ENCODE measurements at regions of chr15 and their contacts with region 1.

Region 1: GRCh38 chr15:23039151-23039916 is at the start of gene TUBGCP5:
- DNase-seq: peak; percentile 95
- H3K4me3 ChIP-seq: peak within 1 kb of the TSS; percentile 63 to 81
- H3K27ac ChIP-seq: peak within 1 kb of the TSS; percentile 56 to 73
- H3K4me1 ChIP-seq: no peaks in the 10 kb centered on the region
- H3K27me3 ChIP-seq: no peaks in the 10 kb centered on the region
- CTCF ChIP-seq: peak; percentile 17 to 84 (median 44)
- POLR2A ChIP-seq: peak; percentile 75
- total RNA-seq, gene TUBGCP5: 25.0 to 38.7 TPM

Region 2: GRCh38 chr15:22980189-22981050 is 58.9 kb before region 1 on chr15 and contains the start of gene CYFIP1:
- intact Hi-C with region 1: loop called (anchors 5 kb)
- DNase-seq: peak; percentile 81
- H3K4me3 ChIP-seq: peak within 1 kb of the TSS; percentile 68 to 97
- H3K27ac ChIP-seq: peak within 1 kb of the TSS; percentile 85 to 86
- H3K4me1 ChIP-seq: peaks cover 6% of the 10 kb centered on the region
- H3K27me3 ChIP-seq: no peaks in the 10 kb centered on the region
- CTCF ChIP-seq: no peak
- POLR2A ChIP-seq: peak; percentile 44
- total RNA-seq, gene CYFIP1: 97.1 to 121 TPM

Region 3: GRCh38 chr15:23069496-23070166 is 30.3 kb after region 1 on chr15:
- intact Hi-C with region 1: no loop called
- DNase-seq: no peak
- H3K4me3 ChIP-seq: no peak overlapping the region
- H3K27ac ChIP-seq: no peak overlapping the region
- H3K4me1 ChIP-seq: no peaks in the 10 kb centered on the region
- H3K27me3 ChIP-seq: no peaks in the 10 kb centered on the region
- CTCF ChIP-seq: no peak
- POLR2A ChIP-seq: no peak

Region 4: GRCh38 chr15:23467110-23467600 is 427.8 kb after region 1 on chr15:
- intact Hi-C with region 1: loop called (anchors 10 kb)
- DNase-seq: no peak
- H3K4me3 ChIP-seq: no peak overlapping the region
- H3K27ac ChIP-seq: no peak overlapping the region
- H3K4me1 ChIP-seq: no peaks in the 10 kb centered on the region
- H3K27me3 ChIP-seq: no peaks in the 10 kb centered on the region
- CTCF ChIP-seq: peak in 3 of 4 experiments; percentile 39 to 68 (median 45)
- POLR2A ChIP-seq: no peak

Region 5: GRCh38 chr15:23506762-23507161 is 467.4 kb after region 1 on chr15:
- intact Hi-C with region 1: no loop called
- DNase-seq: no peak
- H3K4me3 ChIP-seq: no peak overlapping the region
- H3K27ac ChIP-seq: no peak overlapping the region
- H3K4me1 ChIP-seq: no peaks in the 10 kb centered on the region
- H3K27me3 ChIP-seq: peaks cover 2% of the 10 kb centered on the region
- CTCF ChIP-seq: no peak
- POLR2A ChIP-seq: no peak